Ascending aorta (tissue), 2 donors: ENCODE measurements at regions of chr6 and their contacts with region 1.

Region 1: DNA sequence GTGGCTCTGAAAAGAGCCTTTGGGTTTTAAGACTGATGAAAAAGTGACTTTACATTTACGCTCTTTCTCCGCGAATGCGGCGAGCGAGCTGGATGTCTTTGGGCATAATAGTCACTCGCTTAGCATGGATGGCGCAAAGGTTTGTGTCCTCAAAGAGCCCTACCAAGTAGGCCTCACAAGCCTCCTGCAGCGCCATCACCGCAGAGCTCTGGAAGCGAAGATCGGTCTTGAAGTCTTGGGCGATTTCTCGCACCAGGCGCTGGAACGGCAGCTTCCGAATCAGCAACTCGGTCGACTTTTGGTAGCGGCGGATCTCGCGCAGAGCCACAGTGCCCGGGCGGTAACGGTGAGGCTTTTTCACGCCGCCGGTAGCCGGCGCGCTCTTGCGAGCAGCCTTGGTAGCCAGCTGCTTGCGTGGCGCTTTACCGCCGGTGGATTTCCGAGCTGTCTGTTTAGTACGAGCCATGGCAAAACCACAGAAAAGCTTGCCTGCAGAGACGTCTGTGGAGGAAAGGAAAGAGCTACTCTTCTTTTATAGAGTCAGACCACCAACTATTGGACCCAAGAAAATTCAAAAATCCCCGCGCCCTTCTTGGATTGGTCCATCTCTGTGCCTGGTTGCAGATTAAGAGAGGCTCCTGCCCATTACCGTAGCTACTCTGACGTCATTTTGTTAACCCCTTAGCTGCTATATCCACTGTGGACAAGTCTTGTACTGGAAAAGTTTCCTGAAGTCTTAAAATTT is 55.5 kb upstream of the HFE start:
- DNase-seq: peak; percentile 53 to 94
- H3K4me3 ChIP-seq: peak overlapping the region; percentile 56 to 79
- H3K27ac ChIP-seq: peak overlapping the region; percentile 92 to 96
- H3K4me1 ChIP-seq: peaks cover 5 to 20% of the 10 kb centered on the region in 2 donors
- H3K27me3 ChIP-seq: no peaks in the 10 kb centered on the region
- CTCF ChIP-seq: peak in 1 of 3 experiments; percentile 20

Region 2: DNA sequence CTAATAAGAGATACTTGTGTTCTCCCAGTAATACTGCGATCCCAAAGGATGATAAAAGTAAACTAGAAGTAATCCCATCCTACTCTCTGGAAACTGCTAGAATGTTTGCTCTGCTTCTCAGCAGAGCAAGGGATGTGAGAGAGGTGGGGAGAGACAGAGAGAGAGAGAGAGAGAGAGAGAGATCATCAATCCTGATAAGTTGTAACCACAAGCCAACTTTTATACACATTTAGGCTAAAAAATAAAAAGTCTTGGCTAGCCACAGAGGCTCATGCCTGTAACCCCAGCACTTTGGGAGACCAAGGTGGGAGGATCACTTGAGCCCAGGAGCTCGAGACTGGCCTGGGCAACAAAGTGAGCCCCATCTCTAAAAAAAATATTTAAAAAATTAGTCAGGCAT is 85.1 kb before region 1 on chr6:
- intact Hi-C with region 1: no loop called
- DNase-seq: no peak
- H3K4me3 ChIP-seq: no peak overlapping the region
- H3K27ac ChIP-seq: no peak overlapping the region
- H3K4me1 ChIP-seq: no peaks in the 10 kb centered on the region
- H3K27me3 ChIP-seq: no peaks in the 10 kb centered on the region
- CTCF ChIP-seq: no peak

Region 3: GRCh38 chr6:26045065-26045927 is 13.5 kb after region 1 on chr6:
- intact Hi-C with region 1: loop called (anchors 1 kb)
- DNase-seq: peak; percentile 55 to 91
- H3K4me3 ChIP-seq: peak overlapping the region; percentile 67 to 75
- H3K27ac ChIP-seq: peak overlapping the region; percentile 90 to 97
- H3K4me1 ChIP-seq: peaks cover 0 to 8% of the 10 kb centered on the region in 2 donors
- H3K27me3 ChIP-seq: no peaks in the 10 kb centered on the region
- CTCF ChIP-seq: no peak

Region 4: GRCh38 chr6:26196846-26197648 is 165.3 kb after region 1 on chr6:
- intact Hi-C with region 1: loop called (anchors 5 kb)
- DNase-seq: peak; percentile 64 to 91
- H3K4me3 ChIP-seq: peak overlapping the region; percentile 62 to 86
- H3K27ac ChIP-seq: peak overlapping the region; percentile 92 to 95
- H3K4me1 ChIP-seq: peaks cover 4 to 13% of the 10 kb centered on the region in 2 donors
- H3K27me3 ChIP-seq: no peaks in the 10 kb centered on the region
- CTCF ChIP-seq: no peak